ENCODE measurements at regions of chr2 and their contacts with region 1.

Region 1: GRCh38 chr2:157194097-157194688 is 63.3 kb upstream of the GALNT5 start:
- DNase-seq: no peak
- ATAC-seq: peak in 2 of 4 donors; percentile 61 to 65
- H3K4me3 ChIP-seq: no peak overlapping the region
- H3K27ac ChIP-seq: no peak overlapping the region
- H3K4me1 ChIP-seq: peaks cover 3% of the 10 kb centered on the region
- H3K27me3 ChIP-seq: no peaks in the 10 kb centered on the region
- CTCF ChIP-seq: peak; percentile 66

Region 2: GRCh38 chr2:155368934-155369333 is 1825.3 kb before region 1 on chr2:
- intact Hi-C with region 1: loop called in 1 of 2 experiments (anchors 5 kb)
- DNase-seq: no peak
- ATAC-seq: no peak
- H3K4me3 ChIP-seq: no peak overlapping the region
- H3K27ac ChIP-seq: no peak overlapping the region
- H3K4me1 ChIP-seq: no peaks in the 10 kb centered on the region
- H3K27me3 ChIP-seq: no peaks in the 10 kb centered on the region
- CTCF ChIP-seq: no peak

Region 3: DNA sequence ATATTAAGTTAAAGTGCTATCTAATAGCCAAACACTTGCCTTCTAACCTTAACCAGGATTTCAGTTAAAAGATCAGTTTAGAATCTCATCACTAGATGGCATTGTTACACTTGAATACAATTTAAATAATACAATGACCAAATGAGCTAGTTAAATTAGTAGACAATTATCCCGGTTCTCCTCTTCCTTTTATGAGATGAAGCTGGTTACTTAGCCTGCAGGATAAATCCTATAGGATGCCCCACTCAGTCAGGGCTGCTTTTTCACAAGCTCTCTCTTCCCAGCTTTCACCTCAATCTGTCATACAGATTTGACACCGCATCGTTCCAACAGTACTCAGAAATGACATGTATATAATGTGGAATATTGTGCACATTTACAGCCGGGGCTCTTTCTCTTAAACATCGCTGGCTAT is 1816.9 kb before region 1 on chr2:
- intact Hi-C with region 1: loop called in 1 of 2 experiments (anchors 5 kb)
- DNase-seq: no peak
- ATAC-seq: no peak
- H3K4me3 ChIP-seq: no peak overlapping the region
- H3K27ac ChIP-seq: no peak overlapping the region
- H3K4me1 ChIP-seq: no peaks in the 10 kb centered on the region
- H3K27me3 ChIP-seq: no peaks in the 10 kb centered on the region
- CTCF ChIP-seq: peak; percentile 33

Region 4: GRCh38 chr2:157124731-157125130 is 69.5 kb before region 1 on chr2:
- intact Hi-C with region 1: no loop called
- DNase-seq: no peak
- ATAC-seq: no peak
- H3K4me3 ChIP-seq: no peak overlapping the region
- H3K27ac ChIP-seq: no peak overlapping the region
- H3K4me1 ChIP-seq: no peaks in the 10 kb centered on the region
- H3K27me3 ChIP-seq: peaks cover 0 to 3% (median 0%) of the 10 kb centered on the region in 3 donors
- CTCF ChIP-seq: no peak